ENCODE measurements at regions of chr15 and their contacts with region 1.

Region 1: GRCh38 chr15:56365075-56365711 is at the start of gene TEX9:
- DNase-seq: peak; percentile 87
- H3K4me3 Mint-ChIP-seq: peak within 1 kb of the TSS; percentile 79
- H3K27ac Mint-ChIP-seq: no peak within 1 kb of the TSS
- H3K4me1 Mint-ChIP-seq: peaks cover 16% of the 10 kb centered on the region
- H3K27me3 Mint-ChIP-seq: peaks cover 21% of the 10 kb centered on the region
- total RNA-seq, gene TEX9: 1.3 to 1.6 TPM

Region 2: DNA sequence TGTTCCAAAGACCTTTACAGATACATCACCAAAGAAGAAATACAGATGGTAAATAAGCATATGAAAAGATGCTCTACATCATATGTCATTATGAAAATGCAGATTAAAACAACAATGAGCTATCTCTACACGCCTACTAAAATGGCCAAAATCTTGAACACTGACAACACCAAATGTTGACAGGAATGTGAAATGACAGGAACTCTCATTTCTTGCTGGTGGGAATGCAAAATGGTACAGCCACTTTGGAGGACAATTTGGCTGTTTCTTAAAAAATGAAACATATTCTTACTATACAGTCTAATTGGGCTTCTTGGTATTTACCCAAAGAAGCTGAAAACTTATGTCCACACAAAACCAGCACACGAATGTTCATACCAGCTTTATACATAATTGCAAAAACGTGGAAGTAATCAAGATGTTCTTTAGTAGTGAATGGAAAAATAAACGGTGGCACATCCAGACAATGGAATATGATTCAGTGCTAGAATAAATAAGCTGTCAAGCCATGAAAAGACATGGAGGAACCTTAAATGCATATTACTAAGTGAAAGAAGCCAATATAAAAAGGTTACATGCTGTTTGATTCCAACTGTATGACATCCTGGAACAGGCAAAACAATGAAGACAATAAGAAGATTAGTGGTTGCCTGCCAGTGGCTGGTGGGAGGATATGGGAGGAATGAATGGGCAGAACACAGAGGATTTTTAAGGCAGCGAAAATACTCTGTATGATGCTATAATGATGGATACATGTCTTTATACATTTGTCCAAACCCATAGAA is 290.5 kb before region 1 on chr15:
- CTCF ChIA-PET with region 1: no interaction called
- POLR2A ChIA-PET with region 1: no interaction called
- intact Hi-C with region 1: no loop called
- DNase-seq: no peak
- H3K4me3 Mint-ChIP-seq: no peak overlapping the region
- H3K27ac Mint-ChIP-seq: no peak overlapping the region
- H3K4me1 Mint-ChIP-seq: no peaks in the 10 kb centered on the region
- H3K27me3 Mint-ChIP-seq: peaks cover 4% of the 10 kb centered on the region

Region 3: GRCh38 chr15:56464893-56465520 is 99.8 kb after region 1 on chr15 and contains the start of gene MNS1:
- CTCF ChIA-PET with region 1: no interaction called
- POLR2A ChIA-PET with region 1: no interaction called
- intact Hi-C with region 1: loop called (anchors 10 kb)
- DNase-seq: peak; percentile 87
- H3K4me3 Mint-ChIP-seq: peak within 1 kb of the TSS; percentile 83
- H3K27ac Mint-ChIP-seq: no peak within 1 kb of the TSS
- H3K4me1 Mint-ChIP-seq: peaks cover 25% of the 10 kb centered on the region
- H3K27me3 Mint-ChIP-seq: peaks cover 29% of the 10 kb centered on the region
- total RNA-seq, gene MNS1: 0.10 to 0.36 TPM